ENCODE measurements at regions of chr3 and their contacts with region 1.

Region 1: GRCh38 chr3:10164546-10165393 is at the start of gene IRAK2:
- DNase-seq: peak; percentile 78 to 88
- H3K4me3 ChIP-seq: peak within 1 kb of the TSS; percentile 74 to 85 (median 76)
- H3K27ac ChIP-seq: peak within 1 kb of the TSS; percentile 26 to 82 (median 80)
- H3K4me1 ChIP-seq: peaks cover 10 to 27% (median 15%) of the 10 kb centered on the region in 4 donors
- H3K27me3 ChIP-seq: no peaks in the 10 kb centered on the region
- CTCF ChIP-seq: peak in 5 of 7 experiments; percentile 41 to 98 (median 97)
- EP300 ChIP-seq: no peak
- POLR2A ChIP-seq: no peak
- total RNA-seq, gene IRAK2: 0.45 to 6.2 (median 1.9) TPM in 4 of 5 donors, not detected in the other

Region 2: DNA sequence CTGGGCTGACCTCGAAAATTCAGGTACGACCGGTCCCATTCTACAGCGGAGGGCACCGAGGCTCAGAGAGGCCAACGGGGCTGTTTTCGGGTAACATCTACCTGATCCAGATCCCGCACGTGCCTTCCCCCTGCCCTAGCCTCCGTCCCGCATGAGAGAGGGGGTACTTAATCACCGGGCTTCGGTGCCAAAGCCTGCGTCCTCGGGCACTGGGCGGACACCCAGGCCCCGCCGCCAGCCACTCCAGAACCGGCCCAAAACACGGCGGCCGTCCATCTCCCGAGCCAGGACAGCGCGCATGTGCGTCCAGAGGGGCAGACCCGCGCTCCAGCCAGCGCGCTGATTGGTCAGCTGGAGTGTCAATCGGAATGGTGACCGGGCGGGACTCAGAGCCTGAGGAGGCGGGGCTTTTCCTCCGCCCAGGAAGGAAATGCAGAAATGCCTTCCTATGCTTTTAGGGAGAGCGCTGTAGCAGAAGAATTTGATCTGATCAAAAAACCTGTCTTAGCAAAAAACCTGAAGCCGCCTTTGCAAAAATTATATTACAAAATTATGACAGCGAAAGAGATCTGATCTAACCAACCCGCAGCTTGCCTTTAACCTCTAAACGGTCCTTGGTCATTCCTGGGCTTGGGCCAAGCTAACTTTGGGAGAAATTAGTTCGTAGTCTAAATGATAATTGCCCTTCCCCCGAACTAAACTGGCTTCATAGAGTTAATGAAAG is 320.9 kb before region 1 on chr3 and contains the start of gene RPUSD3:
- intact Hi-C with region 1: no loop called
- DNase-seq: peak; percentile 98 to 99
- H3K4me3 ChIP-seq: peak within 1 kb of the TSS; percentile 61 to 80 (median 72)
- H3K27ac ChIP-seq: peak within 1 kb of the TSS; percentile 71 to 87 (median 82)
- H3K4me1 ChIP-seq: peaks cover 11 to 25% (median 22%) of the 10 kb centered on the region in 4 donors
- H3K27me3 ChIP-seq: no peaks in the 10 kb centered on the region
- CTCF ChIP-seq: no peak
- EP300 ChIP-seq: no peak
- POLR2A ChIP-seq: no peak
- total RNA-seq, gene RPUSD3: 6.4 to 62.9 (median 19.3) TPM

Region 3: DNA sequence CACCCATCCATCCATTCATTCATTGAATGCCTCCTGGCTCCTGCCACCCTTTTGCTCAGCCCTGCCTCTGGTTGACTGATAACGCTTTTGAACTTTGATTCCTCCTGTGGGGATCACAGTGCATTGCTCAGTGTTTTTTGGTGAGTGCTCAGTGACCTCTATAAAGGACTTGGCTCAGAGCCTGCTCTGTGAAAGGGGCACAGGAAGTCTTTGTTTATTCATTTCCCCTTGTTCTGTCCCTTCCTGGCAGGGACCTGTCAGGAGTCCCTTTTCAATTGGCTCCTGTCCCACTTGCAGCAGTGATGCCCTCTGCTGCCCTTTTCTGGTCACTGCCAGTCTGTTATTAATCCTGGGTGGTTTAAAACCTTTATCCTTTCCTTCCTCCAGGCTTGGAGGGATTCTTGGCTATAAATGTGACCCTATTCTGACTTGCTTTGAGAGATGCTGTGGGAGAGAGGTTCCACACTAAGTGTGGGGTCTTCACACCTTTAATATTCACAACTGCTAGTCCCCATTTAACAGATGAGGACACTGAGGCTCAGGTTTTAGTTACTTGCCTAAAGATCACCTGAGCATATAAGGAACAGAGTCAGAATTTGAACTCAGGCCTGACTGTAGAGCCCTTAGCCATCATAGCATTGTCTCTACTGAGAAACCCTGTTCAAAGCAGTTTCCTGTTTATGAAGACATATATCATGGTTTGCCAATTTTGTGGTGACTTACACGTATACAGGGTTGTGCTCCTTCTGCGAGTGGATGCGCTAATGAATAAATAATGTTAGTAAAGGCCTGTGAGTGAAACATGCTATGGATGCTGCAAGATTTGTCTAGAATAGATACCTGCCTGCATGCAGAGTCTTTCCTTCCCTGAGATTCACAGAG is 60.3 kb after region 1 on chr3:
- intact Hi-C with region 1: loop called (anchors 10 kb)
- DNase-seq: peak; percentile 83 to 87
- H3K4me3 ChIP-seq: no peak overlapping the region
- H3K27ac ChIP-seq: peak overlapping the region in 4 of 5 donors; percentile 24 to 48 (median 37)
- H3K4me1 ChIP-seq: peaks cover 8 to 65% (median 8%) of the 10 kb centered on the region in 4 donors
- H3K27me3 ChIP-seq: no peaks in the 10 kb centered on the region
- CTCF ChIP-seq: peak in 5 of 7 experiments; percentile 65 to 91 (median 86)
- EP300 ChIP-seq: no peak
- POLR2A ChIP-seq: no peak

Region 4: DNA sequence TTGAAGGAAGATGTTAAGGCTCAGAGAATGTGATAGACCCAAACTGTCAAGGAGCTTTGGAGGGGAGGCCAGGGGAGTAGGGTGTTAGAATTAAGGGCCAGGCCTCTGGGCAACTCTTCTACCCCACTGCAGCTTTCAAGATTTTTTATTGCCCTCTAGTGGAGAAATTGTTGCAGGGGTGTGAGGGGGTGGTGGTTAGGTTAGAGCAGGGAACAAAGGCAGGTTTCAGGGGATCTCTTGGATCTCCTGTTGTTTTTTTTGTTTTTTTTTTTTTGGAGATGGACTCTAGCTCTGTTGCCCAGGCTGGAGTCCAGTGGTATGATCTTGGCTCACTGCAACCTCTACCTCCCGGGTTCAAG is 157.6 kb after region 1 on chr3:
- intact Hi-C with region 1: no loop called
- DNase-seq: no peak
- H3K4me3 ChIP-seq: no peak overlapping the region
- H3K27ac ChIP-seq: no peak overlapping the region
- H3K4me1 ChIP-seq: peaks cover 9 to 39% (median 37%) of the 10 kb centered on the region in 4 donors
- H3K27me3 ChIP-seq: peaks cover 0 to 9% (median 0%) of the 10 kb centered on the region in 3 donors
- CTCF ChIP-seq: peak in 2 of 7 experiments; percentile 14 to 30
- EP300 ChIP-seq: no peak
- POLR2A ChIP-seq: no peak

Measured in stomach (tissue), 19 donors.